AG04449 (cell line): ENCODE measurements at regions of chr14 and their contacts with region 1.

Region 1: GRCh38 chr14:93115069-93115820 is 480 bp downstream of the ITPK1 start:
- DNase-seq: no peak
- H3K4me3 ChIP-seq: peak overlapping the region; percentile 70
- CTCF ChIP-seq: peak; percentile 3

Region 2: DNA sequence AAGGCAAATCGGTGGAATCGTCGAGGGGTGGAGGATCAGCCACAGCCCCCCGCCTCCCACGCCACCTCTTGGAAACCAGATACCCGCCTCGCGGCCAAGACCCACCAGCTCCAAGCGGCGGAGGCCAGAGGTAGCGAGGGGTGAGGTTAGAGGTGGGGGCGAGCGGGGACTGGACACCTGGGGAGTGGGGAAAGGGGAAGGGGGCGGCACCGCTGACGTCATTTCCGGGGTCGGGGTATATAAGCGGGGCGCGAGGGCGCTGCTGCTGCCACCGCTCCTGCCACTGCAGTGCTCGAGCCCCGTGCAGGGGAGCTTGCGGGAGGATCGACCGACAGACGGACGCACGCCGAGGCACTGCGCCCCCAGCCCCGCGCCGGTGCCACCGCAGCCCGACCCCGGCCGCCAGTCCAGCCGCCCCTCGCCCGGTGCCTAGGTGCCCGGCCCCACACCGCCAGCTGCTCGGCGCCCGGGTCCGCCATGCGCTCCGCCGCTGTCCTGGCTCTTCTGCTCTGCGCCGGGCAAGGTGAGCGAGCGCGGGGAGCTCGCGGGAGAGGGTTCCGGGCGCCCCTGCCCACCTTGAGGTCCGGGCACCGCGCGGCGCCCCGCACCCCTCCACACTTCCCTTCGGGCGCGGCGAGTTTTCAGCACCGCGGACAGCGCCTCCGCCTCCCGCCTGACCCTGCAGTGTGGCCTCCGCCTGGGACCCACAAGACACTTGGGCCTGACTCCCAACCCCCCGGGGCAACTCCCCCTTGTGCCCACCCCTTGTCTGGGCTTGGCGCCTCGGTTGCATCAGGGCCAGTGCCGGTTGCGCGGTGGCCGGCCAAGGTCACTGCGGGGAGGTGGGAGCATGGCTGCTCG is 192.1 kb before region 1 on chr14 and contains the start of gene CHGA:
- CTCF ChIA-PET with region 1: no interaction called
- POLR2A ChIA-PET with region 1: no interaction called
- DNase-seq: no peak
- H3K4me3 ChIP-seq: no peak within 1 kb of the TSS
- CTCF ChIP-seq: no peak

Region 3: GRCh38 chr14:92960711-92961549 is 154.3 kb before region 1 on chr14:
- CTCF ChIA-PET with region 1: interaction called, 123 read pairs
- POLR2A ChIA-PET with region 1: no interaction called
- DNase-seq: no peak
- H3K4me3 ChIP-seq: no peak overlapping the region
- CTCF ChIP-seq: no peak

Region 4: GRCh38 chr14:93064411-93065323 is 50.6 kb before region 1 on chr14:
- CTCF ChIA-PET with region 1: interaction called, 14 read pairs
- POLR2A ChIA-PET with region 1: no interaction called
- DNase-seq: no peak
- H3K4me3 ChIP-seq: no peak overlapping the region
- CTCF ChIP-seq: no peak

Region 5: GRCh38 chr14:93103392-93104080 is 11.7 kb before region 1 on chr14:
- CTCF ChIA-PET with region 1: interaction called, 113 read pairs
- POLR2A ChIA-PET with region 1: no interaction called
- DNase-seq: no peak
- H3K4me3 ChIP-seq: no peak overlapping the region
- CTCF ChIP-seq: no peak

Region 6: DNA sequence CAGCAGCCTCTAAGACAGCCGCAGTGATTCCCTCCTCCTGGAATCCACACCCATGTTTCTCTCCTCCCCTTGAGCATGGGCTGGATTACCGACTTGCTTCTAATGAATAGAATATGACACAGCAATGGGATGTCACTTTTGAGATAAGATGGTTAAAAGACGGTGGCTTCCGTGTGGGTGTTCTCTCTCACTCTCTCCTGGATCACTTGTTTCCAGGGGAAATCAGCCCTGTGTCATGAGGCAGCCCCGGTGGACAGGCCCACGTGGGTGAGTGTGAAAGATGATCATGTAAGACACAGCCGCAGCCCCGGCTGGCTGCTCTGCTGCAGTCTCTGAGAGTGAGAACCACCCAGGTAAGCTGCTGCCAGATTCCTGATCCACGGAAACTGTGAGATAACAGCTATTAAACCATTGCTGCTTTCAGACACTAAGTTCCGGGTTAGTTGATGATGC is 58.7 kb after region 1 on chr14:
- CTCF ChIA-PET with region 1: interaction called, 68 read pairs
- POLR2A ChIA-PET with region 1: no interaction called
- DNase-seq: no peak
- H3K4me3 ChIP-seq: no peak overlapping the region
- CTCF ChIP-seq: no peak